PC-9 (cell line): ENCODE measurements at regions of chr6 and their contacts with region 1.

Region 1: GRCh38 chr6:128857806-128858205 is 25.1 kb upstream of the LAMA2 start:
- DNase-seq: no peak
- H3K4me3 ChIP-seq: no peak overlapping the region
- H3K27ac ChIP-seq: no peak overlapping the region
- H3K4me1 ChIP-seq: no peaks in the 10 kb centered on the region
- H3K27me3 ChIP-seq: no peaks in the 10 kb centered on the region
- CTCF ChIP-seq: no peak

Region 2: DNA sequence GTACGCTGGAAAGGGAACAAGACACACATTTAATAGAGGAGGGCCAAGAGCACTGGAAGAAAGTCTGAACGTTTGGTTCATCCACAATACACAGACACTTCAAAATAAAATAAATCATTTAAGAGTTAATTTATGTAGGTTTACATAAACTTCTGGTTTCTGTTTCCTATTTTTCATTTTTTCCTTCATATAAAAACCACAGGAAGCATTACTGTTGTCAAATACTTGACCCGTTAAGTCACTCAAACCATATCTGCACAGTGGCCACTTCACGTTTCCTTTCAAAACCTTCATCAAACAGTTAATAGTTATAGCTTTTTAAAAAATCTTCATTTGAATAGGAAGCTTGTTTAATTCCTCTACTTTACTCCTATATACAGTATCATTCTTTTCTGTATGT is 699.3 kb before region 1 on chr6:
- CTCF ChIA-PET with region 1: no interaction called
- POLR2A ChIA-PET with region 1: no interaction called
- intact Hi-C with region 1: no loop called
- DNase-seq: no peak
- H3K4me3 ChIP-seq: no peak overlapping the region
- H3K27ac ChIP-seq: no peak overlapping the region
- H3K4me1 ChIP-seq: no peaks in the 10 kb centered on the region
- H3K27me3 ChIP-seq: no peaks in the 10 kb centered on the region
- CTCF ChIP-seq: no peak

Region 3: DNA sequence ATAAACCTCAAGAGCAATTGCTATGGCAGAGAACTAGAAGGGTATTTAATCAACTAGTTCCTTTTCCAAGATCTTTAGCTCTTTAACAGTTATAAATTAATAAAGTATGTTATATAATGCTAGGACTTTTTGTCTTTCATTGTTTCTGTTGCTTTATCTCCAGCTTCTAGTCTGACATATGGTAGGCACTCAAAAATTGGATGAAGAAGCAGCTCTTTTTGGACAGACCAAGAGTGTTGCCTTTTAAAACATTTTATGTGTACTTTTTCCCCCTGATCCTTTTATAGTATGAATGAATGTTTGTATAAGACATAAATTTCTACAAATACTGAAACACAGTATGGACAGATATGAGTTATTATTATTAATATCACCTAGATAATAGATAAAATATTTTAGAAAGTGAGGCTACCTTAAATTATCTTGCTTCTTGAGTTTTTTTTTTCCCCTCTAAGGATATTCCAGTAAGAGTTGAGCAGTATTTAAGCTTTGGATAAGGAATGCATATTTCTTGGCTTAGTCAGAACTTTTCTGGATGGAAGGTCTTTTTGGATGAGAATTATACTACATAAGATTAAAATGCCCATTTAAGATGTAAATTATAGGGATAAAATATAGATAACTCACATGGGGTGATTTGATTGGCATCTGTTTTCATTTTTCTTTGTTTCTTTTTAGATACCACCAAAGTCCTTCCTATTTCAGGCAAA is 41.7 kb after region 1 on chr6:
- CTCF ChIA-PET with region 1: no interaction called
- POLR2A ChIA-PET with region 1: no interaction called
- intact Hi-C with region 1: loop called (anchors 2 kb)
- DNase-seq: no peak
- H3K4me3 ChIP-seq: no peak overlapping the region
- H3K27ac ChIP-seq: no peak overlapping the region
- H3K4me1 ChIP-seq: no peaks in the 10 kb centered on the region
- H3K27me3 ChIP-seq: no peaks in the 10 kb centered on the region
- CTCF ChIP-seq: no peak